Activated T-helper 2 cell treated with anti-CD3 and anti-CD28 coated beads, Interferon-gamma antibody, Interleukin-2, Interleukin-4, amounts not matched to agents 10 μg/mL and 5 μg/mL and 100 μg/mL, durations not matched to agents 14 hours and 24 hours and 36 hours (primary cell): ENCODE measurements at regions of chr1 and their contacts with region 1.

Region 1: GRCh38 chr1:214439352-214440119 is 111.9 kb downstream of the PTPN14 start:
- DNase-seq: peak; percentile 59
- H3K4me3 Mint-ChIP-seq: peak overlapping the region; percentile 58
- H3K27ac Mint-ChIP-seq: peak overlapping the region; percentile 93
- H3K4me1 Mint-ChIP-seq: peaks cover 68% of the 10 kb centered on the region
- H3K27me3 Mint-ChIP-seq: no peaks in the 10 kb centered on the region

Region 2: DNA sequence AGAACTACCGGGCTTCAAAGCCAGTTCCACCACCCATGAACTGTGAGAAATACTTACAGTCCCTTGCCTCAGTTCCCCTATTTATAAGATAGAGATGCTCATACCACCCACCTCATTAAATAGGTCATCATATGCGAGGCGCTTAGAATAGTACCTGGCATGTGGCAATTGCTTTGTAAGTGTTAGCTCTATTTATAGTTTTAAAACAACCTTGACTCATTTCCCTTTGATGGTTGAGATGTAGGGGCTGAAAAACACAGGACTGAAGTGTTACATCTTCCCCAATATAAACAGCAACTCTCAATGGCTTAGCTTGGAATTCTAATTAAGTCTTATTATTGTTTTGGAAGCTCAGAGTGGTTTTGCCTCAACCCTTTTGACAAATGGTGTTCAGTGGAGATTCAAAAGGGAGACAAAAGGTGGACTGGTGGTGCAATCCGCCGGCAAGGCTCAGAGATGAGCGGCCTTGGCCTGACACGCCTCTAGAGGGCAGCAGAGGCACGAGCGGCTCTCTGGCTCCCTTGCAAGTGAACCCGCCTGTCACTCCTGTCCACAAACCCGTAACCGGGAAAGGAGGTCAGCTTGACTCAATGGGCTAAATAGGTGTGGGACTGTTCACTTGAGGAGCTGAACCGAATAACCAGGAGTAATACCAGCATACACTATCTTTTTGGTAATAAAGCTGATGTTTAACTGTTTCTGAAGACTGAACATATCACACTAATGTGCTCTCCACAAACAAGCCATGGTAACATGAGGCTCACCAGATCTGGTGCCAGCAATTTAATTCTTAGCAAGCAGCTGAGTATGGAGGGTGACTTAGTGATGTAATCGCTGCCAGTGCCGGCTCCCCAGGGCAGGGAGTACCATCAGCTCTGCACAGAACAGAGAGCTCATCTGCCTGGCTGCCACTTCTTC is 178.1 kb before region 1 on chr1:
- intact Hi-C with region 1: loop called (anchors 5 kb)
- DNase-seq: peak; percentile 71
- H3K4me3 Mint-ChIP-seq: no peak overlapping the region
- H3K27ac Mint-ChIP-seq: no peak overlapping the region
- H3K4me1 Mint-ChIP-seq: peaks cover 28% of the 10 kb centered on the region
- H3K27me3 Mint-ChIP-seq: peaks cover 68% of the 10 kb centered on the region

Region 3: GRCh38 chr1:214328770-214329469 is 110.6 kb before region 1 on chr1:
- intact Hi-C with region 1: loop called (anchors 5 kb)
- DNase-seq: peak; percentile 70
- H3K4me3 Mint-ChIP-seq: no peak overlapping the region
- H3K27ac Mint-ChIP-seq: no peak overlapping the region
- H3K4me1 Mint-ChIP-seq: peaks cover 14% of the 10 kb centered on the region
- H3K27me3 Mint-ChIP-seq: no peaks in the 10 kb centered on the region

Region 4: DNA sequence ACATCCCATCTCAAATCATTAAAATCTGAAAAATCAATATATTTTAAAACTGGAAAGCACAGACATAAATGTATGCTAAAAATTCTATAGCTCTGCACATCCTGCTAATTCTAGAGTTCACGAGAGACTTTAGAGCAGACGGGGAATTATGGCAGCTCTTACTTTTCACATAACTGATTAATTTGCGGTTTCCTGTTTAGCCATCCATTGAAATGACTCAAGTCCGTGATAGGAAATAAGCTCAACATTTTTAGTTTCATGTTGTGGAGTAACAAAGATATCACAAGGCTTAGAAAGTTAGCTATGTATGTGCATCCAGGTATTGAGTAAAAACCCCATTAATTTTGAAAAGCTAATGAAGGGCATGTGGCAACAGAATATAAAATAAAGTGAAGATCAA is 35.4 kb before region 1 on chr1:
- intact Hi-C with region 1: loop called (anchors 1 kb)
- DNase-seq: no peak
- H3K4me3 Mint-ChIP-seq: no peak overlapping the region
- H3K27ac Mint-ChIP-seq: peak overlapping the region; percentile 82
- H3K4me1 Mint-ChIP-seq: peaks cover 48% of the 10 kb centered on the region
- H3K27me3 Mint-ChIP-seq: no peaks in the 10 kb centered on the region

Region 5: DNA sequence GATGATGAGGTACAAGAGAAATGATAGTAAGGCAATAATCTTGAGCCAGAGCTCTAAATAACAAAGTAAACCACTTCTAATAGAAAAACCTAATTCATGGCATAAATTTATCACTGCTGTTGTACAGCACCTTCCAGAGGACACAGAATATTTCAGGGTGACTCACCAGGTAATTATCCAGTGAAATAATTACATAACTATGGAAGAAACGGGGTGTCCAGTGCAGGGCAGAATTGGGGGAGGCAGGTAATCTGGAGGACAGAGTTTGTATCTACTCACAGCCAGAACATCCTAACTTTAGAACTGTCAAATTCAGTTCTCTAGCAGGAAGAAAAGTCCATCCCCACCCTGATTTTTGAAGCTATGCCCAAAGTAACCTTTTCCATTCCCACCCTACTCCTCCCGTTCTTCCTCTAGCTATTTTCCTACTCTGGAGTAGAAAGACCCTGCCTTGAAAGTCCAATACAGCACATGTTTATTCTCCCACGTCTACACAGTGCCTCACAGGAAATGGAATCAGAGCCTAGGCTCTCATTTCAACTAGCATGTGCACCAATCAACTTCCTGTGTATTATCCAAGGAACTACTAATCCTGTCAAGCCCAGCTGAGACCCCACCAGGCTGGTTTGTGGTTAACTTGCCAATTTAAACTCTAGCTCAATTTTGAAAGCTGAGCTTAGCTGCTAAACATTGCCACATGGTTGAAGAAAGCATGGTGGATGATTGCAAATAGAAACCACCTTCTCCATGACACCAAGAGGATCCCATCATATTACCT is 15.3 kb after region 1 on chr1:
- intact Hi-C with region 1: loop called (anchors 1 kb)
- DNase-seq: no peak
- H3K4me3 Mint-ChIP-seq: peak overlapping the region; percentile 6
- H3K27ac Mint-ChIP-seq: peak overlapping the region; percentile 81
- H3K4me1 Mint-ChIP-seq: peaks cover 80% of the 10 kb centered on the region
- H3K27me3 Mint-ChIP-seq: no peaks in the 10 kb centered on the region

Region 6: GRCh38 chr1:214566158-214567104 is 126.9 kb after region 1 on chr1:
- intact Hi-C with region 1: loop called (anchors 2 kb)
- DNase-seq: no peak
- H3K4me3 Mint-ChIP-seq: no peak overlapping the region
- H3K27ac Mint-ChIP-seq: peak overlapping the region; percentile 64
- H3K4me1 Mint-ChIP-seq: peaks cover 32% of the 10 kb centered on the region
- H3K27me3 Mint-ChIP-seq: no peaks in the 10 kb centered on the region